B cell (primary cell): ENCODE measurements at regions of chr6 and their contacts with region 1.

Region 1: DNA sequence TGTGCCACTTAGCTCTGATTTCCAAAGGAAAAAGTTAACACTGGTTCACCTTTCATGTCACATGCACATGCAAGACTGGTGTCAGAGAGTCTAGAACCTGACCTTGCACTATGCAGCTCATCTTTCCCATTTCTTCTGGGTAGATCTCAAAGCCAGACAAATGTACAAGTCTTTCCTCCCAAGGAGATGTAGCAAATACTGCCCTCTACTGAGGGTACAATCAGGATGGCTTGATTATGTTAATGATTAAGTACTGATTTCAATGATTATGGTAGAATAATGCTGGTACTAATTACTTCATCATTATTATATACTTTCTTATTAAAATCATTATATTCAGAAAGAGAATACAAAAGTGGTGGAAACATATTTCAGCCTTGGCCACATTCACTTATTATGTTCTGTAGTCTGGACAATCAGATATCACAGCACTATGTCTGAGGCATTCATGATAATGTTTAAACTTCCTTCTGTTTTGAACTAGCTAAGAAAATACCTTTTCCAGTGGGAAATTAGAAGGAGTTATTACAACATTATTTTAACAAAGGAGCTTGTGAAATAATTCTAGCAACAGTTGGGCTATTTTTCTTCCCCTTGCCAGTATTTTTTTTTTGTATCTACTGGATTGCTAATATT is 68.5 kb upstream of the FOXO3 start:
- DNase-seq: peak; percentile 65
- ATAC-seq: peak; percentile 54
- H3K4me3 ChIP-seq: no peak overlapping the region
- H3K4me3 Mint-ChIP-seq: no peak overlapping the region
- H3K27ac ChIP-seq: no peak overlapping the region
- H3K27ac Mint-ChIP-seq: no peak overlapping the region
- H3K4me1 ChIP-seq: no peaks in the 10 kb centered on the region
- H3K4me1 Mint-ChIP-seq: no peaks in the 10 kb centered on the region
- H3K27me3 ChIP-seq: no peaks in the 10 kb centered on the region
- H3K27me3 Mint-ChIP-seq: no peaks in the 10 kb centered on the region
- CTCF ChIP-seq: peak; percentile 78

Region 2: GRCh38 chr6:108133594-108134179 is 358.6 kb before region 1 on chr6:
- CTCF ChIA-PET with region 1: interaction called, 11 read pairs
- POLR2A ChIA-PET with region 1: no interaction called
- intact Hi-C with region 1: no loop called
- DNase-seq: peak; percentile 60
- ATAC-seq: peak; percentile 74
- H3K4me3 ChIP-seq: peak overlapping the region; percentile 7 to 64 (median 44)
- H3K4me3 Mint-ChIP-seq: peak overlapping the region; percentile 88
- H3K27ac ChIP-seq: no peak overlapping the region
- H3K27ac Mint-ChIP-seq: no peak overlapping the region
- H3K4me1 ChIP-seq: peaks cover 21 to 22% of the 10 kb centered on the region in 2 donors
- H3K4me1 Mint-ChIP-seq: peaks cover 16% of the 10 kb centered on the region
- H3K27me3 ChIP-seq: peaks cover 0 to 61% (median 46%) of the 10 kb centered on the region in 4 experiments
- H3K27me3 Mint-ChIP-seq: peaks cover 73% of the 10 kb centered on the region
- CTCF ChIP-seq: no peak

Region 3: GRCh38 chr6:108168501-108169463 is 323.5 kb before region 1 on chr6:
- CTCF ChIA-PET with region 1: interaction called, 13 read pairs
- POLR2A ChIA-PET with region 1: no interaction called
- intact Hi-C with region 1: no loop called
- DNase-seq: peak; percentile 75
- ATAC-seq: peak; percentile 65
- H3K4me3 ChIP-seq: peak overlapping the region in 4 of 5 experiments; percentile 22 to 59 (median 40)
- H3K4me3 Mint-ChIP-seq: peak overlapping the region; percentile 79
- H3K27ac ChIP-seq: no peak overlapping the region
- H3K27ac Mint-ChIP-seq: no peak overlapping the region
- H3K4me1 ChIP-seq: peaks cover 70 to 80% of the 10 kb centered on the region in 2 donors
- H3K4me1 Mint-ChIP-seq: peaks cover 54% of the 10 kb centered on the region
- H3K27me3 ChIP-seq: peaks cover 3 to 95% (median 84%) of the 10 kb centered on the region in 4 experiments
- H3K27me3 Mint-ChIP-seq: peaks cover 70% of the 10 kb centered on the region
- CTCF ChIP-seq: peak; percentile 23

Region 4: GRCh38 chr6:108250240-108250866 is 241.9 kb before region 1 on chr6:
- CTCF ChIA-PET with region 1: interaction called, 25 read pairs
- POLR2A ChIA-PET with region 1: no interaction called
- intact Hi-C with region 1: loop called (anchors 1 kb)
- DNase-seq: peak; percentile 46
- ATAC-seq: peak; percentile 36
- H3K4me3 ChIP-seq: no peak overlapping the region
- H3K4me3 Mint-ChIP-seq: peak overlapping the region; percentile 12
- H3K27ac ChIP-seq: no peak overlapping the region
- H3K27ac Mint-ChIP-seq: no peak overlapping the region
- H3K4me1 ChIP-seq: peaks cover 40 to 53% of the 10 kb centered on the region in 2 donors
- H3K4me1 Mint-ChIP-seq: peaks cover 77% of the 10 kb centered on the region
- H3K27me3 ChIP-seq: no peaks in the 10 kb centered on the region
- H3K27me3 Mint-ChIP-seq: no peaks in the 10 kb centered on the region
- CTCF ChIP-seq: peak; percentile 55

Region 5: GRCh38 chr6:108476847-108477430 is 15.3 kb before region 1 on chr6:
- CTCF ChIA-PET with region 1: interaction called, 19 read pairs
- POLR2A ChIA-PET with region 1: no interaction called
- intact Hi-C with region 1: no loop called
- DNase-seq: no peak
- ATAC-seq: no peak
- H3K4me3 ChIP-seq: no peak overlapping the region
- H3K4me3 Mint-ChIP-seq: no peak overlapping the region
- H3K27ac ChIP-seq: no peak overlapping the region
- H3K27ac Mint-ChIP-seq: no peak overlapping the region
- H3K4me1 ChIP-seq: no peaks in the 10 kb centered on the region
- H3K4me1 Mint-ChIP-seq: no peaks in the 10 kb centered on the region
- H3K27me3 ChIP-seq: no peaks in the 10 kb centered on the region
- H3K27me3 Mint-ChIP-seq: no peaks in the 10 kb centered on the region
- CTCF ChIP-seq: no peak

Region 6: DNA sequence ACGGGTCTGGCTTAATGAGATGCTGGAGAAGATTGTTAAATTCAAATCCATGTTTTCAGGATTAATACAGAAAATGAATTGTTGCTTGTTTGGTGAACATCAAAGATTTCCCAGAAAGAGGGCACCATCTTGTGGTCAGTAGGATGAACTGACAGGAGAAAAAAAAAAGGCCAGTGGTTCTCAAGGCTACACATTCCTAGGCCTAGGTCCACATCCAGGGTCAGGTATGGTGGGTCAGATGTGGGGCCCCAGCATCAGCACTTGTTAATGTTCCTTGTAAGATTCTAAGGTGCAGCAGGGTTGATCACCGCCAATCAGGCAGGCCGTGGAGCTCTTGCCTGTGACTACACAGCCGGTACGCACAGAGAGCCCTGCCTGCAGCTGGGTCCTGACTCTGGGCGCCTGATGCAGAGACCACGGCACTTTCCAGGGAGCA is 34.5 kb after region 1 on chr6:
- CTCF ChIA-PET with region 1: interaction called, 20 read pairs
- POLR2A ChIA-PET with region 1: no interaction called
- intact Hi-C with region 1: no loop called
- DNase-seq: peak; percentile 63
- ATAC-seq: peak; percentile 49
- H3K4me3 ChIP-seq: no peak overlapping the region
- H3K4me3 Mint-ChIP-seq: no peak overlapping the region
- H3K27ac ChIP-seq: no peak overlapping the region
- H3K27ac Mint-ChIP-seq: no peak overlapping the region
- H3K4me1 ChIP-seq: no peaks in the 10 kb centered on the region
- H3K4me1 Mint-ChIP-seq: no peaks in the 10 kb centered on the region
- H3K27me3 ChIP-seq: no peaks in the 10 kb centered on the region
- H3K27me3 Mint-ChIP-seq: no peaks in the 10 kb centered on the region
- CTCF ChIP-seq: peak; percentile 86